K562 (cell line): ENCODE measurements at regions of chr17 and their contacts with region 1.

Region 1: DNA sequence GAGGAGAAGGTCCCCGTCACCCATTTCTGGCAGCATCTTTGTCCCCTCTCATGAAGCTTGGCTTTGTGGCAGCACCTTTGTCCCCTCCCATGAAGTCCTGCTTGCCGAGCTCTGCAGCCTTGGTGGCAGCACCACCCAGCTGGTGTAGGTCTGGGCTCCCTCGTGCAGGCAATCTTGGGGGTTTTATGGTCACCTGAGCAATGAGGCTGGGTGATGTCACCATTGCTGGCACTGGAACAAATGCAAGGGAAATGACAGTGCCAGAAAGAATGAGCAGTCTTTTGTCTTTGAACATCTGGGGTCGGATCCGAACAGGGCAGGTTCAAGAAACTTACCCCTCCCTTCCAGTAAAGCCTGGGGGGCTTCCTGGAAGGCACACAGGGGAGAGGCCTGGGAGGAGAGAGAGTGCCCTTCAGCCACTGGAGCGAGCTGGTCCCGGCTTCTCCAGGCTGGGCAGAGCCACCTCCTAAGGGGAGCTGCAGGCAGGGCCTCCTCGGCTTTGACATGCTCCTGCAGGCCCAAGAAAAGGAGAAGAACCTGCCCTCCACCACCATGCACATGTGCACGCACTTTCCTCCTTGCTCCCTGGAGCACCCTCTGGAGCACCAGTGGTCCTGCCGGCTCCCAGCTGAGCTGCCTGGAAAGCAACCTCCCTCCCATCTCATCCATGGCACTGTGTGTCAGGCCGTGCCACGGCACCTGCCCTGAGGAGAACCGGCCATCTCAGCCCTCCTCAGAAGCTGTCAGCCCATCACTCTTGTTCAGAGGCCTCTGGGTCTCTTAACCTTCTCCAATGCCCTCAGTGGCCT is 16.0 kb downstream of the BTBD17 start:
- DNase-seq: no peak
- ATAC-seq: no peak
- H3K4me3 ChIP-seq: no peak overlapping the region
- H3K27ac ChIP-seq: no peak overlapping the region
- H3K4me1 ChIP-seq: peaks cover 0 to 20% of the 10 kb centered on the region in 2 experiments; a peak in 2 of 5 replicates
- H3K27me3 ChIP-seq: peaks cover 45 to 82% of the 10 kb centered on the region in 2 experiments
- CTCF ChIP-seq: no peak
- EP300 ChIP-seq: no peak
- POLR2A ChIP-seq: no peak
- RAD21 ChIP-seq: no peak

Region 2: DNA sequence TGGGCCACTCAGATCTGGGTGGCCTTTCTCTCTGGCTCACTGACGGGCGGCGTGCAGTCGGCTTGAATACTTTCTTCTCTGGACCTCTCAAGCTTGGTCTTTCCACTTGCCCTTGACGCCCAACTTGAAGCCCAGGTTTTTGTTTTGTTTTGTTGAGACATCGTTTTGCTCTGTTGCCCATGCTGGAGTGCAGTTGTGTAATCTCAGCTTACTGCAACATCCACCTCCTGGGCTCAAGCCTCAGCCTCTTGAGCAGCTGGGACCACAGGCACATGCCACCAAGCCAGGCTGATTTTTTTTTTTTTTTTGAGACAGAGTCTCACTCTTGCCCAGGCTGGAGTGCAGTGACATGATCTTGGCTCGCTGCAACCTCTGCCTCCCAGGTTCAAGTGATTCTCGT is 42.3 kb before region 1 on chr17:
- CTCF ChIA-PET with region 1: no interaction called
- POLR2A ChIA-PET with region 1: interaction called, 4 read pairs
- in situ Hi-C with region 1: loop called (anchors 5 kb)
- intact Hi-C with region 1: no loop called
- DNase-seq: no peak
- ATAC-seq: no peak
- H3K4me3 ChIP-seq: no peak overlapping the region
- H3K27ac ChIP-seq: no peak overlapping the region
- H3K4me1 ChIP-seq: peaks cover 3 to 7% of the 10 kb centered on the region in 2 experiments; a peak in 3 of 5 replicates
- H3K27me3 ChIP-seq: no peaks in the 10 kb centered on the region
- CTCF ChIP-seq: no peak
- EP300 ChIP-seq: no peak
- POLR2A ChIP-seq: no peak
- RAD21 ChIP-seq: no peak

Region 3: DNA sequence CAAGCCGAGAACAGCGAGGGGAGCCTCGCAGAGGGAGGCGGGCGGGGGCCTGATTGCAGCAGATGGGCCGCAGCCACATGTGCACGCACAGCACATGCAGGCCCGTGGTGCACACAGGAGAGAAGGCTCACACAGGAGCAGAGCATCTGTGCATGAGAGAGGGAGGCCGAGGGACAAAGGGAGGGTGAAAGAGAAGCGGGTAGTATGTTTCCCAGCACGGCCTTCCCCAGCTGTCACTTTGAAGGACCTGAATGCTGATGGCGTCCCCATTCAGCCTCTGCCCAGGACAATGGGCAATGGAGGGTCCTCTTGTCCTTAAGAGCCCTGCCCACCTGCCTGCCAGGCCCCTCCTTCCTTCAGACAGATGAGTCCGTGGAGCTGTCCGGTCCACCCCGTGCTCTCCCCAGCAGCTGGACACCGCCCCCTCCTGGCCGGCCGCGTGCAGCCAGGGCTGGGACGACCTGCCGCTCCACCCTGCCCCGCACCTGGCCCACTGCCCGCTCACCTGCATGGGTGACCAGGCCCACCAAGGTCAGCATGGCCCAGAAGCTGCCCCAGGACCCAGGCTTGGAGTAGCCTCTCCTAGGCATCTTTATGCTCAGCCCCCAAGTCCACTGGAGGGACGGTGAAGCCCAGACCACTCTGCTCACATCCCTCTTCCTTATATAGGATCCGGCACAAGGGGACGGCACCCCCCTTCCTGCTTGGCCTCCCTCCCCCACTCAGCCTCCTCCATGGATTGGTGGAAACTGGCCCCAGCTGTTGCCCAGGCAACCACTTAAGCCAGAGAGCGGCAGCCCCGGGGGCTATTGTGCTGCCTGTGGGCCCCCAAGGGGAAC is 15.8 kb after region 1 on chr17 and contains the start of gene BTBD17:
- CTCF ChIA-PET with region 1: no interaction called
- POLR2A ChIA-PET with region 1: no interaction called
- in situ Hi-C with region 1: no loop called
- intact Hi-C with region 1: no loop called
- DNase-seq: peak; percentile 67 to 83 (median 82)
- ATAC-seq: peak; percentile 99
- H3K4me3 ChIP-seq: no peak within 1 kb of the TSS
- H3K27ac ChIP-seq: no peak within 1 kb of the TSS
- H3K4me1 ChIP-seq: peaks cover 0 to 31% of the 10 kb centered on the region in 2 experiments; a peak in 2 of 5 replicates
- H3K27me3 ChIP-seq: peaks cover 14 to 62% of the 10 kb centered on the region in 2 experiments; a peak in 3 of 5 replicates
- CTCF ChIP-seq: peak; percentile 79 to 88 (median 86)
- EP300 ChIP-seq: no peak
- POLR2A ChIP-seq: no peak
- RAD21 ChIP-seq: peak; percentile 85 to 91
- polyA plus RNA-seq, gene BTBD17: not detected

Region 4: DNA sequence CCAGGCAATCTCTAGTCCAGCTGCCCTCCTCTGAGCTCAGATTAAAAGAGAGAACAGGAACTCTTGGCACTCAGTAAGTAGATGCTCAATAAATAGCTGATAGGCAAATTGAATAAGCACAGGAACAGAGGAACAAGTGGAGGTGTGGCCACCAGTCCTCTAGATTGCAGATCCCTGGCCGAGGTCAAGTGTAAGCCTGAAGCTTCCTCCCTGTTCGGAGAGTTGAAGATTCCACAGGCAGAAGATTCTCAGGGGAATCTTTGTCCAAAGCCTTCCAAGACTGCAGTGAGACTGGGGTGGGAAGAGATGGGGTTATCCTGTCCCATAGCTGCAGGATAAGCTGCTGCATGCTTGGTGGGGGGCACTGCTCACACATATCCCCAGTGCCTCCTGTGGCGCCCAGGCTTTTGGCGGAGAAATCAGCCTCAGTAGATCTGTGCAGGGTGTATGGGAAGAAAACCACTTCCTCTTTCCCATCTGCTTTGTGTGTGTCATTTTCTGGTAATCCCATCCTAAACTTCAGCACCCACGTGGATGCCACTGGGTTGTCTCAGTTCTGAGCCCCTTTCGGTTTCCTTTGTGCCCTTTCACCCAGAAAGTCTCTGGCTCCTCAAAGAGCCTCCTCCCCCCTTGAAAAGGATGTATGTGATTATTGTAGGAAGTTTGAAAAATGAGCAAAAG is 132.9 kb after region 1 on chr17:
- CTCF ChIA-PET with region 1: no interaction called
- POLR2A ChIA-PET with region 1: no interaction called
- in situ Hi-C with region 1: no loop called
- intact Hi-C with region 1: no loop called
- DNase-seq: no peak
- ATAC-seq: no peak
- H3K4me3 ChIP-seq: no peak overlapping the region
- H3K27ac ChIP-seq: no peak overlapping the region
- H3K4me1 ChIP-seq: peaks cover 0 to 5% of the 10 kb centered on the region in 2 experiments; a peak in 3 of 5 replicates
- H3K27me3 ChIP-seq: peaks cover 3 to 64% of the 10 kb centered on the region in 2 experiments; a peak in 2 of 5 replicates
- CTCF ChIP-seq: no peak
- EP300 ChIP-seq: no peak
- POLR2A ChIP-seq: no peak
- RAD21 ChIP-seq: 0 out of 4 replicates have a peak, but pooled peaks of 1 of the 2 experiments have one; percentile 3